Activated CD4-positive, alpha-beta T cell treated with anti-CD3 and anti-CD28 coated beads, Interleukin-2, amount 10 ng/mL, durations not matched to agents 24 days and 14 days (primary cell): ENCODE measurements at regions of chrX and their contacts with region 1.

Region 1: GRCh38 chrX:119266364-119266995 is 30.4 kb downstream of the PGRMC1 start:
- DNase-seq: peak; percentile 68
- H3K4me3 Mint-ChIP-seq: no peak overlapping the region
- H3K27ac Mint-ChIP-seq: no peak overlapping the region
- H3K4me1 Mint-ChIP-seq: no peaks in the 10 kb centered on the region
- H3K27me3 Mint-ChIP-seq: peaks cover 22% of the 10 kb centered on the region

Region 2: GRCh38 chrX:119118780-119119395 is 147.6 kb before region 1 on chrX:
- intact Hi-C with region 1: loop called (anchors 2 kb)
- DNase-seq: peak; percentile 81
- H3K4me3 Mint-ChIP-seq: no peak overlapping the region
- H3K27ac Mint-ChIP-seq: no peak overlapping the region
- H3K4me1 Mint-ChIP-seq: no peaks in the 10 kb centered on the region
- H3K27me3 Mint-ChIP-seq: peaks cover 5% of the 10 kb centered on the region

Region 3: GRCh38 chrX:119784747-119785446 is 518.4 kb after region 1 on chrX:
- intact Hi-C with region 1: no loop called
- DNase-seq: peak; percentile 83
- H3K4me3 Mint-ChIP-seq: peak overlapping the region; percentile 45
- H3K27ac Mint-ChIP-seq: peak overlapping the region; percentile 30
- H3K4me1 Mint-ChIP-seq: peaks cover 20% of the 10 kb centered on the region
- H3K27me3 Mint-ChIP-seq: no peaks in the 10 kb centered on the region